PC-9 (cell line): ENCODE measurements at regions of chr22 and their contacts with region 1.

Region 1: DNA sequence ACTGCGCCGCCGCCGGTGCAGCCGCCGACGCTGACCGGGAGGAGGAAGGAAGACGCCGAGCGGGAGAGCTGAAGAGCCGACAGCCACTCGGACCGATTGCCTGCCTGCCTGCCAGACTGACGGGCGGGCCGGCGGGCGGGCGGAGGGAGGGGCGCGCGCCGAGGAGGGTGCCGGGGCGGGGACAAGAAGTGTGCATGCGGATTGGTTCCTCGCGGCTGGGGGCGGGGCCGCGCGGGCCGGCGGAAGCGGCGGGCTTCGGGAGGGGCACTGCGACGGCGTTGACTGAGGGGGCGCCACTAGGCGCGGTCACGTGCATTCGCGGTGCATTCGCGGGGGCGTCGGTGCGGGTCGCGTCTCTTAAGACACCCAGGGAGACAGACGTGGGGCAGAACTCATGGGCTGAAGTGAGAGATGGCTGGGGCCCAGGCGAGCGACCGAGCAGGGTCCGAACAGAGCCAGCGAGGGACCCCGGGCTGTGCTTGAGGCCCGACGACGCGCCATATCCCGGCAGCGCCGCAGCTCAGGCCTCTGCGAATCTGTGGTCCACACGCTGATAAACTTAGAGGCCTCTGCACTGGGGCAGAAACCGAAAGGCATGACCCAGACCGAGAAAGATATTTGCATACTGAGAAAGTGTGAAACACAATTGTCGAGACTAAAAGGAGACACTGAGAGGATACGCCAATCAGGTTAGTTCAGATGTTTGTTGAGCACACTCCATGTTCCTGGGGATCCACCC is at the start of gene MAPK1:
- DNase-seq: peak; percentile 66 to 84
- H3K4me3 ChIP-seq: peak within 1 kb of the TSS; percentile 84
- H3K27ac ChIP-seq: no peak within 1 kb of the TSS
- H3K4me1 ChIP-seq: peaks cover 14% of the 10 kb centered on the region
- H3K27me3 ChIP-seq: no peaks in the 10 kb centered on the region
- CTCF ChIP-seq: no peak; the same call in 1 of the 2 replicates
- total RNA-seq, gene MAPK1: 66.7 and 82.8 TPM in 2 replicates

Region 2: GRCh38 chr22:21735200-21736076 is 132.3 kb before region 1 on chr22 and contains the start of gene YPEL1:
- CTCF ChIA-PET with region 1: no interaction called
- POLR2A ChIA-PET with region 1: no interaction called
- intact Hi-C with region 1: loop called (anchors 10 kb)
- DNase-seq: peak; percentile 61 to 92
- H3K4me3 ChIP-seq: peak within 1 kb of the TSS; percentile 57
- H3K27ac ChIP-seq: no peak within 1 kb of the TSS
- H3K4me1 ChIP-seq: peaks cover 9% of the 10 kb centered on the region; the same call in 1 of the 2 replicates
- H3K27me3 ChIP-seq: no peaks in the 10 kb centered on the region
- CTCF ChIP-seq: no peak
- total RNA-seq, gene YPEL1: 5.2 and 8.3 TPM in 2 replicates

Region 3: DNA sequence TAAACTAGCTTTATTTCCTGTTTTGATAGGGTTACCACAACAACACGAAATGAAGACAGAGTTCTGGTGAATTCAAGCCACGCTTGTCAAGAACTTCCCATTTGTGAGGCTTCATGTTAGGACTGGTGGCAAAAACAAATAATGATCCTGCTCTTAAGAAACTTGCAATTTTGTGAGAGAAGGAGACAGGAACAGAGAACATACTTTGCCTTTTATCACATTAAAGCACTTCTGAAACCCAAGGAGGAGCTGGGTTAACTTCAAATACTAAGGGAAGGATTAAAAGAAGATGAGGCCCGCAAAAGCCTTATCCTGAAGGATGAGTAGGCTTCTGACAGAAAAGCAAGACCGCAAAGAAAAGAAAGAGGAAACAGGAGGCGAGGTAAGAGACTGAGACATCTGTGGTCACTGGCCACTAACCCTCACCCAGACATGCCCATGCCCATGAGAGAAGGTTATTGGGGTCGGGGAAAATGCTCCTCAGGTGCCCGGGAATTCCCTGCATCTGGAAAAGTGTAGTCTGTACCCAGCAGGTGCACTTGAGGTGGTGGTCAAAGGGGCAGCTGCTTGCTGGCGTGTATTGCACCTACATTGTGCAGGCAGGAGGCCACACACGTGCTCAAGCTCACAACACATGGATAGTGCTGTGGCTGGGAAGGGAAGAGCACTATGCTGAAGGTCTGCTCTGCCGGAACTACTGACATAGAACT is 50.8 kb before region 1 on chr22:
- CTCF ChIA-PET with region 1: no interaction called
- POLR2A ChIA-PET with region 1: no interaction called
- intact Hi-C with region 1: loop called (anchors 5 kb)
- DNase-seq: peak in 1 of 2 experiments; percentile 69
- H3K4me3 ChIP-seq: no peak overlapping the region
- H3K27ac ChIP-seq: peak overlapping the region; percentile 54
- H3K4me1 ChIP-seq: peaks cover 14% of the 10 kb centered on the region
- H3K27me3 ChIP-seq: no peaks in the 10 kb centered on the region
- CTCF ChIP-seq: no peak

Region 4: DNA sequence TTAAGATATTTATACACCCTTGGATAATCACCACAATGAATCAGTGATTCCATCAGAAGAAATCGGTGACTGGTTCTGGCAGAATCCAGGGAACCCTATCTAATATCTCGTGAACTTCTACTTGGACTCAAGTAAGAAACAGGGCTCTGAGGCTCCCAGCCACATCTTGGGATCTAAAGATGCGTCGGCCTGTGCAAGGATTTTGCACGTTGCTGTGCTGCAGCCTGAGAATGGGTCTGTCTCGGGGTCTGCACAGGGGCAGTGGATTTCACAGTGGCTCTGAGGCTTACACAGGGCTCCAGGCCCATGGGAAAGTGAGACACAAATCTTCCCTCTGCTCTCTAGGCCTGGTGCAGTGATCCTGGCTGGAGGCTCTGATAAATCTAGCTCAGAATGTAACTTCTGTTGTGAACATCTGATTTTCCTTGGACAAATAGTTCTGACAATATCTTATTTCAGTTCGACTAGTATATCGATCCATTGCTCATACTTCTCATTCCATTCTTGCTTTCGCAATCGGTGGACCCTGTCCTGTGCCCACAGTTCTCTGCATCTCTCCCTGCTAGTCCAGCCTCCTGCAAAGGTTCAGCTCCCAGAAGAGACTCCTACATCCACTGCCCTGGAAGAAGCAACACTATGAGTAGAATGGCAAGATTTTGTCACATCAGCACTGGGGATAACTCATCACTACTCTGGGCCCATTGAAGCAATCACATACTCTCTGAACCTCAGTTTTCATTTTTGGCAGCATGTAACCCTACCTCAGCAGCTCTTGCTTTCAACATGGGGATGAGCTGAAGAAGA is 220.4 kb after region 1 on chr22:
- CTCF ChIA-PET with region 1: no interaction called
- POLR2A ChIA-PET with region 1: no interaction called
- intact Hi-C with region 1: no loop called
- DNase-seq: no peak
- H3K4me3 ChIP-seq: no peak overlapping the region
- H3K27ac ChIP-seq: no peak overlapping the region
- H3K4me1 ChIP-seq: no peaks in the 10 kb centered on the region
- H3K27me3 ChIP-seq: peaks cover 7% of the 10 kb centered on the region; the same call in 1 of the 2 replicates
- CTCF ChIP-seq: no peak

Region 5: GRCh38 chr22:22195265-22196017 is 327.7 kb after region 1 on chr22:
- CTCF ChIA-PET with region 1: no interaction called
- POLR2A ChIA-PET with region 1: no interaction called
- intact Hi-C with region 1: no loop called
- DNase-seq: peak; percentile 53 to 67
- H3K4me3 ChIP-seq: no peak overlapping the region
- H3K27ac ChIP-seq: no peak overlapping the region
- H3K4me1 ChIP-seq: no peaks in the 10 kb centered on the region
- H3K27me3 ChIP-seq: peaks cover 19% of the 10 kb centered on the region; the same call in 1 of the 2 replicates
- CTCF ChIP-seq: peak; percentile 83

Region 6: DNA sequence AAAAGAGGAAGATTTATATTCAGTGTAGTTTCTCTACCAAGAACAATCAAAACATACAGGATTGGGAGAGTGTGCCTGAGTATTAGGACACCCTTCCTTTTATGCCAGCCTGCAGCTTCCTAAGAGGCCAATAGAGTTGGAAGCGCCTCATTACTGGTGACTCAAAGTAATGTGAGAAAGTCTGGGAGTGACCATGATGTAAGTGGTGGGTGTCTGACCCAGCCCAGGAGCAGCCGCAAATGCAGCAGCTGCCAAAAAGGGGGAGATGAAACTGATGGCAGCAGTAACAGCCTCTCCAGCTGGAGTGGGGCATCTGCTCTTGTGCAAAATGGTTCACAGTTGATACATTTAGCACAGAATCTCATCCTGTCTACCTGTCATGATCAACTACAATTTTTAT is 578.8 kb after region 1 on chr22:
- CTCF ChIA-PET with region 1: no interaction called
- POLR2A ChIA-PET with region 1: no interaction called
- intact Hi-C with region 1: no loop called
- DNase-seq: no peak
- H3K4me3 ChIP-seq: no peak overlapping the region
- H3K27ac ChIP-seq: no peak overlapping the region
- H3K4me1 ChIP-seq: no peaks in the 10 kb centered on the region
- H3K27me3 ChIP-seq: peaks cover 17% of the 10 kb centered on the region
- CTCF ChIP-seq: no peak